Right ventricle myocardium superior (tissue), 1 donor: ENCODE measurements at regions of chr2 and their contacts with region 1.

Region 1: DNA sequence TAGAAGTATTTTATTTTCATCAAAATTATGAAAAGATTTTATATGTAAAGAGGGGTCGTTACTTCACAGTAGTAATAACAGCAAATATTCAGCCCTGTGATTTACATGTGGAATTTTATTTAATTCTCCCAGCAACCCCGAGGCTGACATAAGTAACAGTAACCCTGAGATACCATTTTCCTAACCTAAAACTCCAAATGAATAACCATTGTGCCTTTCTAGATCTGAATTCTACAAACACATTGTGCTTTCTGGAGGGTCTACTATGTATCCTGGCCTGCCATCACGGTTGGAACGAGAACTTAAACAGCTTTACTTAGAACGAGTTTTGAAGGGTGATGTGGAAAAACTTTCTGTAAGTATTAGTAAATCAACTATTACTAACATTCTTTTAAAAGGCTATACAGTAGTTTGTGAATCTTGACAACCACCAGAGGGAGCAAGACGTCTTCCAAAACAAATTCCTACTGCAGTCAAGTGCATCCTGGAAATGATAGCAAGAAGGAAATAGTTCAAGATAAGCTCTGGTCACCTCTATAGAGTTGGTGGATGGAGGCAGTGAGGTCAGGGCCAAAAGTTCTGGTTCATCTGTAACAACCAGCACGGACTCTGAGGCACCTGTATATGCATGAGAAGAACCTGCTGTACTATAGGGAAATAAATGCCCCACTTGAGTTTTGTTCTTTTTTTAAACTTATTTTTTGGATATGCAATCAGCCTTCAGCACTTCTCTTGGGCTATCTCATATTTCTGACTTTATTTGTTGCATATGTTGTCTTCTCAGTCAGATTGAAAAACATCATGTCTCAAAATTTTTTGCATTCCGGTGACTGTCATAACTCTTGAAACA is 37.4 kb downstream of the ACTR2 start:
- DNase-seq: no peak
- ATAC-seq: peak; percentile 85

Region 2: GRCh38 chr2:65554765-65555591 is 289.9 kb after region 1 on chr2:
- intact Hi-C with region 1: loop called (anchors 5 kb)
- DNase-seq: no peak
- ATAC-seq: no peak